Natural killer cell (primary cell): ENCODE measurements at regions of chr1 and their contacts with region 1.

Region 1: GRCh38 chr1:29912425-29912824 is 676.1 kb downstream of the PTPRU start:
- DNase-seq: peak in 1 of 2 donors; percentile 18
- ATAC-seq: no peak
- H3K4me3 ChIP-seq: no peak overlapping the region
- H3K4me3 Mint-ChIP-seq: no peak overlapping the region
- H3K27ac ChIP-seq: no peak overlapping the region
- H3K27ac Mint-ChIP-seq: no peak overlapping the region
- H3K4me1 ChIP-seq: no peaks in the 10 kb centered on the region
- H3K4me1 Mint-ChIP-seq: no peaks in the 10 kb centered on the region
- H3K27me3 ChIP-seq: no peaks in the 10 kb centered on the region
- H3K27me3 Mint-ChIP-seq: peaks cover 7 to 40% of the 10 kb centered on the region in 2 donors
- CTCF ChIP-seq: peak; percentile 25

Region 2: DNA sequence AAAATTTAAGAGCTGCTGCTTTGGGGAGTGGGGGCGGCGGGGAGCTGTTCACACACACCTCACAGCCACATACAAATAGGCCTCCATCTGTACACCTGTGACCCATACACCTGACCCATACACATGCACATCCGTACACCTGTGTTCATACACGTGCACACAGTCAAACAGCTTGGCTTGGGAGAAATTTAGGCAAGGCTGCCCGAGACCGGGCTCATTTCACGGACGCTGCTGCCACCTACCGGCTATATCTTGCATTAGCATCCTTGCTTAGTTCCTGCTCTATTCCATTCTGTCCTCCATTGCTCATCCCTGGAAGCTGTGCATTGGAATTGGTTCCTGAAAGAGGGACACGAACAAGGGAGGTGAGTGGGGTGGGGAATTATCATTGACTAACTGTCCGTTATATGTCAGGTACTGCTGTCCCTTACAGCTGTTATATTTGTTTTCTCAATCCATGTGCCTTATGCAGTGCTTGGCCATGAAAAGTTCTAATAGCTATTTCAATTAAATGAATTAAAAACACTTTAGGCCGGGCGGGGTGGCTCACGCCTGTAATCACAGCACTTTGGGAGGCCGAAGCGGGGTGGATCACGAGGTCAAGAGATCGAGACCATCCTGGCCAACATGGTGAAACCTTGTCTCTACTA is 1035.2 kb before region 1 on chr1:
- intact Hi-C with region 1: no loop called
- DNase-seq: peak; percentile 71 to 89
- ATAC-seq: peak; percentile 81 to 88 (median 85)
- H3K4me3 ChIP-seq: no peak overlapping the region
- H3K4me3 Mint-ChIP-seq: no peak overlapping the region
- H3K27ac ChIP-seq: no peak overlapping the region
- H3K27ac Mint-ChIP-seq: no peak overlapping the region
- H3K4me1 ChIP-seq: peaks cover 6% of the 10 kb centered on the region
- H3K4me1 Mint-ChIP-seq: peaks cover 4 to 5% of the 10 kb centered on the region in 2 donors
- H3K27me3 ChIP-seq: no peaks in the 10 kb centered on the region
- H3K27me3 Mint-ChIP-seq: peaks cover 0 to 2% of the 10 kb centered on the region in 2 donors
- CTCF ChIP-seq: peak; percentile 89

Region 3: DNA sequence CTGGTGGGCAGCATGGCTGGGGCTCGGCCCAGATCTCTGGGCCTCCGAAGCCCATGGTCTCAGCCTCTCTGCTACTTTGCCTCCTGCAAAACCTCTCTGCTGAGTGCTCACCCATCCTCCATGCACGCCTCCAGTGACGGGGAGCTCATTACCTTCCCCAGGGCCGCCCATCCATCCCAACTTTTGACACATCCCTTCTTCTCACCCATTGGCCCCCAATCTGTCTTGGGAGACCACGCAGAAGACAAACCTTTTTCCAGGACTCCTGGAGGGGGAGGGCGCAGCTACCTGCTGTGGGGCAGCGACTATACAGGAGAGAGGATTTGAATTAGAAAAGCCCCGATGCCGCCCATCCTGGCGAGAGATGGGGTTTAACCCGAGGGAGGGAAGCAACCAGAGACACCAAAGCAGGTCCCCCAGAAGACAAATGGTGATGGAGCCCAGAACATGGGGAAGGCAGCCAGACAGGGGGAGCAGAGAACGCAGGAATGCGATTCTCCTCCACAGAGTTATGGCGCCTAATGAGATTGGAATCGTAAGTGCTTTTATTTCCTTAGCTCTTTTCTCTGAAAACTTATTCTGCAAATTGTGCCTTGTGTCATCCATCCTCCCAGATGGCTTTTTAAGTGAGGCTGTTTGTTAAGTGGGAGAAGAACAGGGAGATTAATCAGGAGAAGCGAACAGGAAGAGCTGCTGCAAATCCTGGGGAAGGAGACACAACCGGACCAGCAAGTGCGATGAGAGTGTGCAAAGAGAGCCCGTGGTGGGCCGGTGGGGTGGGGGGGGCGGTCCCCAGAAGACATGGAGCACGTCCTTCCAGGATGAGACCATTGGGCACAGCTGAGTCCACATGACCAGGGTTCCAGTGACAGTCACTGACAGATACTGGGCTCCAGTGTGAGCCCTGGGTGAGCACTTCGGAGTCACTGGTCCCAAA is 187.4 kb after region 1 on chr1:
- intact Hi-C with region 1: loop called (anchors 10 kb)
- DNase-seq: no peak
- ATAC-seq: no peak
- H3K4me3 ChIP-seq: no peak overlapping the region
- H3K4me3 Mint-ChIP-seq: no peak overlapping the region
- H3K27ac ChIP-seq: no peak overlapping the region
- H3K27ac Mint-ChIP-seq: no peak overlapping the region
- H3K4me1 ChIP-seq: no peaks in the 10 kb centered on the region
- H3K4me1 Mint-ChIP-seq: no peaks in the 10 kb centered on the region
- H3K27me3 ChIP-seq: no peaks in the 10 kb centered on the region
- H3K27me3 Mint-ChIP-seq: peaks cover 0 to 6% of the 10 kb centered on the region in 2 donors
- CTCF ChIP-seq: no peak

Region 4: GRCh38 chr1:30232288-30232899 is 320.0 kb after region 1 on chr1:
- intact Hi-C with region 1: loop called (anchors 1 kb)
- DNase-seq: peak in 1 of 2 donors; percentile 47
- ATAC-seq: peak in 2 of 3 donors; percentile 58 to 70
- H3K4me3 ChIP-seq: no peak overlapping the region
- H3K4me3 Mint-ChIP-seq: no peak overlapping the region
- H3K27ac ChIP-seq: no peak overlapping the region
- H3K27ac Mint-ChIP-seq: no peak overlapping the region
- H3K4me1 ChIP-seq: no peaks in the 10 kb centered on the region
- H3K4me1 Mint-ChIP-seq: no peaks in the 10 kb centered on the region
- H3K27me3 ChIP-seq: no peaks in the 10 kb centered on the region
- H3K27me3 Mint-ChIP-seq: no peaks in the 10 kb centered on the region
- CTCF ChIP-seq: peak; percentile 82

Region 5: DNA sequence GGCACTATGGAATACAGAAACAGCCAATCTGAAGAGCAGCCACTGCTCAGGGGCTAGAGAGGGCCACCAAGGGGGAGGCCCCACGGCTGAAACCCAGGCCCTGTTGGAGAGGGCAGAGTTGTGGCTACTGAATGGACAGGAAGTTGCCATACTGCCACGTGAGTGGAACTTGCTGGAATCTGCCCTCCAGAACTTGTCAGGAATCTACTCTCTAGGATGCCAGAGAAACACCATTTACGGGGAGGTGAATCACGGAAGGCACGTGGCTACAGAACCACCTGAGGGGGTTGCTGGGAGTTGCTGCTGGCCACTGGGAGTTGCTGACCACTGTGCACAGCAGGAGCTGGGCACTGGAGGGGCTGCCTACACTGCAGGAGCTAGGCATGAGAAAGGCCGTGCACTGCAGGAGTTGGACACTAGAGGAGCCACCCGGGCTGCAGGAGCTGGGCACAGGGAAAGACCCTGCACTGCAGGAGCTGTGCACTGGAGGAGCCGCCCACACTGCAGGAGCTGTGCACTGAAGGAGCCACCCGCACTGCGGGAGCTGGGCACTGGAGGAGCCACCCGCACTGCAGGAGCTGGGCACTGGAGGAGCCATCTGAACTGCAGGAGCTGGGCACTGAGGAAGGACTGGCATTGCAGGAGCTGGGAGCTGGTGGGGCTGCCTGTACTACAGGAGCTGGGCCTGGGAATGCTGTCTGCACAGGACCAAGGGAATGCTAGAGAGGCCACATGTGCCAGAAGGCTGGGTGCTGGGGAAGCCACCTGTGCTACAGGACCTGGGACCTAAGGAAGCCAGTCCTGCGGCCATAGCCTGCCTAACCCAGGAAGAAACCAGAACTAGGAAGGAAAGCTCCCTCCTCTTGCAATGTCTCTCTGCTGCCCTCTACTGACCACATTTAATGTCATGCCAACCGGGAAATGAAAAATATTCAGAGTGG is 467.5 kb after region 1 on chr1:
- intact Hi-C with region 1: loop called (anchors 1 kb)
- DNase-seq: peak; percentile 16 to 81
- ATAC-seq: peak; percentile 61 to 81 (median 61)
- H3K4me3 ChIP-seq: no peak overlapping the region
- H3K4me3 Mint-ChIP-seq: no peak overlapping the region
- H3K27ac ChIP-seq: no peak overlapping the region
- H3K27ac Mint-ChIP-seq: no peak overlapping the region
- H3K4me1 ChIP-seq: no peaks in the 10 kb centered on the region
- H3K4me1 Mint-ChIP-seq: peaks cover 0 to 13% of the 10 kb centered on the region in 2 donors
- H3K27me3 ChIP-seq: peaks cover 2% of the 10 kb centered on the region
- H3K27me3 Mint-ChIP-seq: peaks cover 0 to 10% of the 10 kb centered on the region in 2 donors
- CTCF ChIP-seq: peak; percentile 80

Region 6: GRCh38 chr1:30420519-30421050 is 508.2 kb after region 1 on chr1:
- intact Hi-C with region 1: no loop called
- DNase-seq: no peak
- ATAC-seq: no peak
- H3K4me3 ChIP-seq: no peak overlapping the region
- H3K4me3 Mint-ChIP-seq: no peak overlapping the region
- H3K27ac ChIP-seq: no peak overlapping the region
- H3K27ac Mint-ChIP-seq: no peak overlapping the region
- H3K4me1 ChIP-seq: no peaks in the 10 kb centered on the region
- H3K4me1 Mint-ChIP-seq: no peaks in the 10 kb centered on the region
- H3K27me3 ChIP-seq: no peaks in the 10 kb centered on the region
- H3K27me3 Mint-ChIP-seq: peaks cover 5 to 9% of the 10 kb centered on the region in 2 donors
- CTCF ChIP-seq: no peak